GM10248 (cell line): ENCODE measurements at regions of chr11 and their contacts with region 1.

Region 1: DNA sequence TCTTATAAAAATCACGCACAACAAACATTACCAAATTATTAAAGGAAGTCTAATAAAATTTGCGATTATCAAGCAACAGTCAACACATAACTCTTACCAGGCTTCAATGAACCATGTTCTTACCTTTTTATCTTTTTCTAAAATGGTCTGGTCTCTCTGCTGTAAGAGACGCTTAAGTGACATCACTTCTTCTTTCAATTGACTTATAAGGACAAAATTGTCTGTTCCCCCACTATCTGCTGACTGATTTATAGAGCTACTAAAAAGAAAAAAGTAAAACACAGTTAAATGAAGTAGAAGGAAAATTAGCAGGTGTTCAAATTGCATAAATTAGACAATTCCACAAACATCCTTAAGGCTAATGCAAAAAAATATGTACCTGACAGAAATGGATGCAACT is 10.9 kb downstream of the FAM76B start:
- DNase-seq: no peak
- CTCF ChIP-seq: no peak

Region 2: GRCh38 chr11:95592471-95592870 is 186.2 kb before region 1 on chr11:
- CTCF ChIA-PET with region 1: no interaction called
- POLR2A ChIA-PET with region 1: no interaction called
- DNase-seq: no peak
- CTCF ChIP-seq: no peak

Region 3: DNA sequence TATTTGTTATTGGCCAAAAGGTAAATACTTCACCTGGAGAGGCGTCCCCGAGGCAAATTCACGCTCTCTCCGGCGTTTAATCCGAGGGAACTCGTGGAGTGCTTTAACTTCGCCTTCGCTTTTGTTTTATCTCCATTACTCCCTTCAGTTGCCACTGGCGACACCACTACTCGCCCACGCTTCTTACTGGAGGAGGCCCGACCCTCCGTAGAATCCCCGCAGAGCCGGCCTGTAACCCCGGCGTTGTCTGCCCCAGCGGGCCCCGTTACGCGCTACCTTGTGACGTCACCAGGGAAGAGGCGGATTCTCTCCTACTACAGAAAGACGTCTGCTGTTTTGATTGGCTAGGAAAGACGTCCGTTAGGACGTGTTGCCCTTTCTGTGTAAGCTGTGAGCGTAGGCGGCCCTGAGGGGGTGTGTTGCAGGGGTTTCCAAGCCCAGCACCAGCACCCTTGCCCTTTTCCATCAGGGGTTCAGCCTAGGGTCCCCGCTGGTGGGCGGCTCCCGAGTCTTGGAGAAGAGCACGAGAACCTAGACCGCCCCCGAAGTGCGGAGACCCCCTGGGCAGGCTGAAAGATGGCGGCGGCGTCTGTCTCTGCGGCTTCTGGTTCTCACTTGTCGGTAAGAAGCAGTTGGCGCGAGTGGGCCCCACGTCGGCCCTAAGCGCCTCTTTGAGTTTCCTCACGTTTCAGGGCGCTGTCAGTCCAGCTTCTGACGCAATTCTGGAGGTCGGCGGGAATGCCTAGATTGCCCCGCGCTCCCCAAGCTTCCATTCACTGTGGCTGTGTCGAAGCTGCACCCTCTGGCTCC is 11.6 kb after region 1 on chr11 and contains the start of gene CEP57:
- CTCF ChIA-PET with region 1: interaction called, 18 read pairs
- POLR2A ChIA-PET with region 1: no interaction called
- DNase-seq: peak; percentile 92
- CTCF ChIP-seq: no peak